Activated CD4-positive, alpha-beta T cell treated with anti-CD3 and anti-CD28 coated beads, Interleukin-2, amount 10 ng/mL, durations not matched to agents 7 days and 5 days (primary cell): ENCODE measurements at regions of chr16 and their contacts with region 1.

Region 1: DNA sequence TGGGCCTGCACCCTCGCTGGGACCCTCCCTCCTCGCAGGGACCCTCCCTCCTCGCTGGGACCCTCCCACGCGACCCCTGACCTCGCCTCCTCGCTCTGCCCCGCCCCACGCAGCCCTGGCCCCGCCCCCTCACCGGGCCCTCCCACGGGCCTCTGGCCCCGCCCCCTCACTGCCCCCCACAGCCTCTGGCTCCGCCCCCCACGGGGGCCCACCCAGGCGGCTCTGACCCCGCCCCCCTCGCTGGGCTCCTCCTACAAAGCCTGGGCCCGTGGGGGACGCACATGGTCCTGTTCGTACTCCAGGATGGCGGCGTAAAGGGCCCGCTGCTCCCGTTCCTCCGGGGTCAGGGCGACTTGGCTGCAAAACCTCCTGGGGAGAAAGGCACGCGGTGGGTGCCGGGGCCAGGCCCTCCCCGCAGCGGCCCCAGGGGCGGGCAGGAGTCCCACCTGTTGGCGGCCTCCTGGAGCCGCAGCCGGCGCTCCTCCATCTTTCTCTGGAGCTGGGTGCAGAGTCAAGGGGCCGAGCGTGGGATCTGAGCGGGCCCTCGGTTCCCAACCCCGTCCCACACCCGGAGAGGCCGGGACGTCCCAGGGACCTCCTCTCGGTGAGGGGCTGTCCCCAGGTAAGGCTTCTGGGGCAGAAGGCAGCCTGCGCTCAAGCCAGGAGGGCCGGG is 9.0 kb downstream of the VPS9D1 start:
- DNase-seq: peak; percentile 76
- H3K4me3 Mint-ChIP-seq: peak overlapping the region; percentile 64
- H3K27ac Mint-ChIP-seq: no peak overlapping the region
- H3K4me1 Mint-ChIP-seq: peaks cover 9% of the 10 kb centered on the region
- H3K27me3 Mint-ChIP-seq: no peaks in the 10 kb centered on the region

Region 2: GRCh38 chr16:89693289-89693731 is 18.4 kb before region 1 on chr16:
- CTCF ChIA-PET with region 1: no interaction called
- POLR2A ChIA-PET with region 1: no interaction called
- DNase-seq: no peak
- H3K4me3 Mint-ChIP-seq: no peak overlapping the region
- H3K27ac Mint-ChIP-seq: peak overlapping the region; percentile 9
- H3K4me1 Mint-ChIP-seq: peaks cover 20% of the 10 kb centered on the region
- H3K27me3 Mint-ChIP-seq: no peaks in the 10 kb centered on the region

Region 3: DNA sequence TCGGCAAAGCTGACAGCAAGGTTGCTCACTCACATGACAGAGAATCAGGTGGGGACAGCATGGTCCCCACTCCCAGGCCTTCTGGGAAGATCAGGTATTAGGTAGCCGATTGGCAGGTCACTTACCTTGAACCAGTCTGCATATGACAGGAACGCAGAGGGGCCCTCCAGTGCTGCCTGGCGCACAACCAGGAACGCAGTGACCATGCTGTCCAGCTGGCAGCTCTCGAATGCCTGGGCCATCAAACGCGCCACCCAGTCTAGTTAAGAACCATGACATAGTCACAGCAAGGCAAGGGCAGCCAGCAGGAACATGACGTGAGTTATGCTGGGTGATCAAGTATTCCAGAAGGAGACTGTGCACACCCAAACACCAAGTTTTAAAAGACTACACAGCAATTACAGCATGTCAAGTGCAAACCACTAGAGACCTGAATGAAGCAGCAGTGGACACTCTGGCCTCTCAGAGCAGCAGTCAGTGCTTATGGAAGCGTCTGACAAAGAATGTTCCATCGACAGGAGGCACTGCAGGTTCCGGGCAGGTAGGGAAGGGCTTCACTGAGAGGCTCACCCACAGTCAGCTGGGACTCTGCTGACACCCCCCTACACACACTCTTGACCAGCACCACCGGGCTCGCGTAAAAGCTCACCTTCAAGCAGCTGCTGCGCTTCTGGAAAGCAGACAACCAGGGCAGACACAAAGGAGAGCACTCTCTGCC is 79.7 kb after region 1 on chr16:
- CTCF ChIA-PET with region 1: interaction called, 29 read pairs
- POLR2A ChIA-PET with region 1: no interaction called
- DNase-seq: no peak
- H3K4me3 Mint-ChIP-seq: no peak overlapping the region
- H3K27ac Mint-ChIP-seq: no peak overlapping the region
- H3K4me1 Mint-ChIP-seq: peaks cover 14% of the 10 kb centered on the region
- H3K27me3 Mint-ChIP-seq: no peaks in the 10 kb centered on the region